PC-3 (cell line): ENCODE measurements at regions of chrX and their contacts with region 1.

Region 1: DNA sequence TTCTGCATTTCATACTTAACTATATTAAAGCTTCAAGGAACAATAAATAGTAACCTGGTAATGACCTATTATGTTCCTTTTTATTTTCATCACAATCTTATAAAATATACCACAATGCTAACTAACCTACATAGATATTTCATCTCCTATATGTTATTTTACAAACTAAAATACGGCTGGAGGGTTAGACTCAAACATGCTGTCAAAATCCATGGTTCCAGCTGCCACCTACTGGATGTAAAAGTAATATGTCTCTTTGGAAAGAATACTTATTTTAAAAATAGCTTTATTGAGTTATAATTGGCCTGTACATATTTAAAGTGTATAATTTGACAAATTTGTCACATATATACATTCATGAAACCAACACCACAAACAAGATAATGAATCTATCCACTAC is 15.0 kb downstream of the RGN start:
- DNase-seq: peak; percentile 54
- ATAC-seq: no peak
- H3K4me3 ChIP-seq: no peak overlapping the region
- H3K27ac ChIP-seq: no peak overlapping the region
- H3K4me1 ChIP-seq: no peaks in the 10 kb centered on the region
- H3K27me3 ChIP-seq: no peaks in the 10 kb centered on the region
- CTCF ChIP-seq: peak; percentile 69

Region 2: GRCh38 chrX:46803140-46803539 is 290.1 kb before region 1 on chrX:
- CTCF ChIA-PET with region 1: no interaction called
- POLR2A ChIA-PET with region 1: no interaction called
- intact Hi-C with region 1: loop called (anchors 2 kb)
- DNase-seq: peak; percentile 46
- ATAC-seq: peak; percentile 64
- H3K4me3 ChIP-seq: no peak overlapping the region
- H3K27ac ChIP-seq: no peak overlapping the region
- H3K4me1 ChIP-seq: no peaks in the 10 kb centered on the region
- H3K27me3 ChIP-seq: no peaks in the 10 kb centered on the region
- CTCF ChIP-seq: peak; percentile 62

Region 3: GRCh38 chrX:46873746-46874145 is 219.5 kb before region 1 on chrX:
- CTCF ChIA-PET with region 1: no interaction called
- POLR2A ChIA-PET with region 1: no interaction called
- intact Hi-C with region 1: no loop called
- DNase-seq: no peak
- ATAC-seq: no peak
- H3K4me3 ChIP-seq: no peak overlapping the region
- H3K27ac ChIP-seq: no peak overlapping the region
- H3K4me1 ChIP-seq: peaks cover 5% of the 10 kb centered on the region
- H3K27me3 ChIP-seq: no peaks in the 10 kb centered on the region
- CTCF ChIP-seq: no peak

Region 4: GRCh38 chrX:46978341-46979291 is 114.6 kb before region 1 on chrX:
- CTCF ChIA-PET with region 1: no interaction called
- POLR2A ChIA-PET with region 1: no interaction called
- intact Hi-C with region 1: loop called (anchors 2 kb)
- DNase-seq: peak; percentile 84
- ATAC-seq: peak; percentile 81
- H3K4me3 ChIP-seq: no peak overlapping the region; the same call in 1 of the 2 replicates
- H3K27ac ChIP-seq: peak overlapping the region; percentile 76
- H3K4me1 ChIP-seq: peaks cover 20% of the 10 kb centered on the region
- H3K27me3 ChIP-seq: no peaks in the 10 kb centered on the region
- CTCF ChIP-seq: peak; percentile 88

Region 5: DNA sequence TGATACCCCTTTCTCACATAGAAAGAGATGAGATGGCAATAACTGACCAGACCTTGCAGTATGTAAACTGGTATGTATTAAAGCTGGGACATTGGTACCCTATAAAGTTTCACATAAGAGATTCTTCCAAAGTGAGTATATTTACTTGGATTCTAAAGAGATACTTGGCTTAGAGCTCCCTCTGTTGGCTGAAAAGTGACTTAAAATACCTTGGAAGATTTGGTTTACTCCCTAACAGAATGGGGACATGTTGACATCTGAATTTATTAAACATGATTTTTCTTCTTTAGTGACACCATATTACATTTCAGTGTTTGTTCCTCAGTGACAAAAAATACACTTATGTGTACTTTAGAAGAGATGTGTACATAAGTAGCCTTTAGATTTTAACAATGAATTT is 62.9 kb before region 1 on chrX:
- CTCF ChIA-PET with region 1: interaction called, 4 read pairs
- POLR2A ChIA-PET with region 1: no interaction called
- intact Hi-C with region 1: loop called (anchors 5 kb)
- DNase-seq: peak; percentile 89
- ATAC-seq: peak; percentile 64
- H3K4me3 ChIP-seq: no peak overlapping the region
- H3K27ac ChIP-seq: no peak overlapping the region
- H3K4me1 ChIP-seq: no peaks in the 10 kb centered on the region
- H3K27me3 ChIP-seq: no peaks in the 10 kb centered on the region
- CTCF ChIP-seq: peak; percentile 74

Region 6: DNA sequence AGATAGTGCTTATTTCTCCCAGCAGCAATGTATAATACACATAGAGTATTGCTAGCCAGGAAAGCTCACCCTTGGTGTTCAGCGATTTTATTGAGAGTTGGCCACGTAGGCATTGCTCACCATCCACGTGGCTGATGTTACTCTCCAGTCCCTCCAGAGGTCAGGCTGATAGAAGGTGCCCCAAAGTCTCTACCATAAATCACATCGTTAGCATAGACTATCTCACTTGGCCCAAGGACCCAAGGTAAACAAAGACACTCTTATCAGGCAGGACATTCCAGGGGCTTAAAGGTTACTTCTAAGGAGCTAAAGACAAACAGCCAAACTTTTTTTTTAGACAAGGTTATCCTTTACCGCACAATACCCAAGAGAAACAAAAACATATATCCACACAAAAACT is 45.3 kb before region 1 on chrX:
- CTCF ChIA-PET with region 1: no interaction called
- POLR2A ChIA-PET with region 1: no interaction called
- intact Hi-C with region 1: loop called (anchors 5 kb)
- DNase-seq: peak; percentile 50
- ATAC-seq: peak; percentile 84
- H3K4me3 ChIP-seq: no peak overlapping the region
- H3K27ac ChIP-seq: peak overlapping the region; percentile 38
- H3K4me1 ChIP-seq: no peaks in the 10 kb centered on the region
- H3K27me3 ChIP-seq: no peaks in the 10 kb centered on the region
- CTCF ChIP-seq: no peak; the same call in 1 of the 2 replicates

Region 7: DNA sequence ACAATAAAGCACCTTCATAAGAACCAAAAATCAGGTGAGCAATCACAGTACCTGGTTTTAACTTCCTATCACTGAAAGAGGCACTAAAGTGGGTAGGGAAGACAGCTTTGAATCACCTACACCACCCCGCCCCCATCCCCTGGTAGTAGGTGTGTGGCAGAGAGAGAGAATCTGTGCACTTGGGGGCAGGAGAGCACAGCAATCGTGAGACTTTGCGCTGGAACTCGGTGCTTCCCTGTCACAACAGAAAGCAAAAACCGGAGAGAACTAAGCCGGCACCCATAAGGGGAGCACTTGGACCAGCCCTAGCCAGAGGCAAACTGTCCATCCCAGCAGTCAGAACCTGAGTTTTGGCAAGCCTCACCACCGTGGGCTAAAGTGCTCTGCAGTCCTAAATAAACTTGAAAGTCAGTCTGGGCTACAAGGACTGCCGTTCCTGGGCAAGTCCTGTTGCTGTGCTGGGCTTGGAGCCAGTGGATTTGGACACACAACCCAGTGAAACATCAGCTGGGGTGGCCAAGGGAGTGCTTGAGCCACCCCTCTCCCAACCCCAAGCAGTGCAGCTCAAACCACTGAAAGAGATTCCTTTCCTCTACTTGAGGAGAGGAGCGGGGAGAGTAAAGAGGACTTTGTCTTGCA is 19.2 kb after region 1 on chrX:
- CTCF ChIA-PET with region 1: no interaction called
- POLR2A ChIA-PET with region 1: no interaction called
- intact Hi-C with region 1: no loop called
- DNase-seq: no peak
- ATAC-seq: no peak
- H3K4me3 ChIP-seq: no peak overlapping the region
- H3K27ac ChIP-seq: no peak overlapping the region
- H3K4me1 ChIP-seq: no peaks in the 10 kb centered on the region
- H3K27me3 ChIP-seq: no peaks in the 10 kb centered on the region
- CTCF ChIP-seq: no peak

Region 8: DNA sequence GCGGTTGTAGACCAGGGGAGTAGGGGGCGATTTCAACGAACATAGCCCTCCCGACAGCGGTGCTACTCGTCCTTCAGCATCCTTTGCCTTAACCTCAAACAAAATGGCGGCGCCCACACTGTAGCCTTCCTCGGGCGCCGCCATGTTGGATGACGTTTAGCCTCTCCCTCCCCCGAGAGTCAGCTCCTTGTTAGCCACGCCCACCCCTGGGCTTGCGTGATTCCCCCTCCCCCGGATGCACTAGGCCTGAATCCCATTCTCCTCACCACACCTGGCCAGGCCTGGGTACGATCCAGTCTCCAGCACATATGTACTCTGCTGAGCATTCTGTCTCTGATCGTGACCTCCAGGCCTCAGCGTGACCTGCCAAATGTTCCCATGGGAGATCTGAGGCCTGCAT is 228.1 kb after region 1 on chrX:
- CTCF ChIA-PET with region 1: no interaction called
- POLR2A ChIA-PET with region 1: no interaction called
- intact Hi-C with region 1: no loop called
- DNase-seq: no peak
- ATAC-seq: no peak
- H3K4me3 ChIP-seq: no peak overlapping the region
- H3K27ac ChIP-seq: no peak overlapping the region
- H3K4me1 ChIP-seq: no peaks in the 10 kb centered on the region
- H3K27me3 ChIP-seq: no peaks in the 10 kb centered on the region
- CTCF ChIP-seq: no peak